ENCODE measurements at regions of chr10 and their contacts with region 1.

Region 1: DNA sequence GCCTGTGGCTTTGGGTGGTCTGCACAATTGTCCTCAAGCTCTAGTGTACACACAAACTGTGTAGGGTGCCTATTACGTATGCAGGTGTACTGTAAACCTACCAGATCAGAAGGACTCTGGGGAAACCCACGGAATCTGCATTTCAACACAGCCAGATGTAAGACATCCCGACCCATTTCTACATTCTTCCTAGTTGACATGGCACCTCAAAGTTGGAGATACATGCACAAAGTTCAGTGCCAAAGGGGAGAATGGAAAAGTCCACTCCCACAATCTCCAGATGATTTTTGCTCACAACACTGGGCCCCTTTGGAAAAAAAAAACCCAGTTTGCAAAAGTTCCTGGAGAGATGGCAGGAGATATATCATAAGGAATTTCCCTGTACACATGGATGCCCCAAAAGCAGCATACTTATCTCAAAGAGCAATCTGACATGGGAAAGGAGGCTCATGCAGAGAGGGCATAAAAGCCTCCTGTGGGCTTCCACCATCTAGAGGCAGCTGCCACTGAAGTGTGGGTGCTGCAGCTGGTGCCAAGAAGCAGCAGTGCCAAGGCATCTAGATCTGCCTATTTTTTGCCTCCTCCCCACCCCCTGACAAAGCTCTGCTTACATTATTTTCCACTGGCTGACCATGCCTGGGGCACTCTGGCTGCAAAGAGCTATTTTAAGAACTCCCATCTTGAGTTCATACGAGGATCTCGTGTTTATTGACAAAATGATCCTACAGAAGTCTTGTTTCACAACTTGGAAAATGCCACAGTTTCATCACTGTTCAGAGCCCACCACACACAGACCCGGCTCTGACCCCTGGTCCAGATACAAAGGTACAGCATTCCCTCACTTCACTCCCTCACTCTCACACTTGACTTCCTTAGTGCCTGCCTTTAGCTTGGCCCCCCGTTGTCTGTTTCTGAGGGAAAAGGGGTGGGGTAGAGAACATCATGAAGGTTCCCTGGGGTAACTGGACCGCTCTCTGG is 12.9 kb downstream of the TECTB start:
- DNase-seq: no peak

Region 2: DNA sequence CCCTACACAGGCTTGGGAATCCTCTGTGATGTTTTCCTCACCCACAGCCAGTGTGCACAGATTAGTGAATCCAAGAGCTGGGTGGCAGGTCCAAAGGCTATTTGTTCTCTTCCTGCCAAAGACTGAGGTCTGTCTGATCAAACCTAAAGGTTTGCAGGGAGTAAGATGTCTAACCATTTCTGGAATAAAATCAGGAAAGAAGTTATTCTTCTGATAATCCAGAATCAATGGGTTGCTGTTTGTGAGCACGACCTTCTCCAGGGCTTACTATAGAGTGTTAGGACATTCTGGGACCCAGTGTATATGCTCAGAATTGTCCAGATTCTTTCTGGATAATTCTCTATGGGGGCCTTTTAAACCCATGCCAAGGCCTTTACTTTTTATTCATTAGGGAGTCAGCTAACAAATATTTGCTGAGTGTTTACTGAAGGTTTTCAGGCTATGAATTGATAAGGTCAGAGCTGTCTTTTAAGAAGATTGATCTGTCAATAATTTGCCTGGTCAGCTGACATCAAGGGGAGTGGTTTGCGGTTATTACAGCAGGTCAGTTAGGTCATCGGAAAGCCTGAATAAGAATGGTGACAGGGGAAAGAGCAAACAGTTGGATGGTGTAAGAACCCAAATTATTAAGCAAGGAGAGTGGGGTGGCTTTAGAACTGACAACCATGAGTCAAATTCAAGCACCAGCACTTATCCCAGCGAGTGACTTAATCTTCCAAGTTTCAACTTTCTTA is 20.5 kb before region 1 on chr10:
- intact Hi-C with region 1: loop called in 1 of 2 experiments (anchors 2 kb)
- DNase-seq: no peak